ENCODE measurements at regions of chr14 and their contacts with region 1.

Region 1: DNA sequence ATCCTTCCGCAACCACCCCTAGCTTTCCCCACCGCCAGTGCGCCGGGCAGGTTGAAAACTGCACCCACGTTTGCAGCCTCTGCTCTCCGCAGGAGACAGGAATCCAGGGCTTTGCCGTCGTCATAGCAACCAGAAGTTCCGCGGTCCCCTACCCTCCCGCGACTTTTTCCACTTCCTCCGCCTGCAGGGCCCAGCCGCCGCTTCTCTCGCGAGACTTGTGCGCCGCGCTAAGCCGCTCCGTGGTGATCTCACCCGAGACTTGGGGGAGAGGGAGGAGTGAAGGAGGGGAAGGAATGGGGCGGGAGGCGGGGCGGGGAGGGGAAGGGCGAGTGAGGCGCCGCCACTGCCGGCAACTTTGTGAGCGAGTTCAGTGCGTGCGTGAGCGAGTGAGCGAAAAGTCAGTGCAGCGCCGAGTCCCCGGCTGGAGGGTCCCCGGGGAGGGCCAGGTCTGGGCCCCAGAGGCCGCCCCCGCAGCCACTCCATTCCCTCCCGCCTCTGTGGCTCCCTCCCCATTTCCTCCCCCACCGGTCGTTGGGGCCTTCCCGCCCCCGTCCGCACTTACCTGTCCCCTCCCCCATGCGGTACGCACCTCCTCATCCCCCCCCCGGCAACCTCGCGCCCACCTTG is 413.0 kb downstream of the PCNX1 start:
- DNase-seq: peak; percentile 96 to 99 (median 99)
- ATAC-seq: peak; percentile 89
- H3K4me3 ChIP-seq: peak within 1 kb of the TSS; percentile 56
- H3K4me1 ChIP-seq: peaks cover 8% of the 10 kb centered on the region
- CTCF ChIP-seq: no peak

Region 2: DNA sequence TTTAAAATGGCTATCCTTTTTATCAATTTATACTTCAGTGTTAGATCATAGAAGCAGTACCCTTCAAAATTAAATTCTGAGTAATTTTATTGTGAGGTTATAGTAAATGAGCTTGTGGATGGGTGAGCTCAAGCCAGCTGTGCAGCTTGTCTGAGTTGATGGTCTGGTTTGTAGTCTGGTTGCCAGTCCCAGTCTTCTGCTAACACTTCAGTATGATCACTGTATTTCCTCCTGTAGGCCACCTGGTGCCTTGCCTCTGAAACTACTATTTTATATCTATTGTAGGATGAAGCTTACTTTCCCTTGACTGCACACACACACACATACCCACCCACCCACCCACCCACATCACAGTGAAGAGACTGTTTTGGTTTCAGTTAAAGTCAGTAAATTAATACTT is 83.4 kb after region 1 on chr14:
- intact Hi-C with region 1: loop called in 1 of 2 experiments (anchors 10 kb)
- DNase-seq: peak in 1 of 3 donors; percentile 40
- ATAC-seq: peak; percentile 81
- H3K4me3 ChIP-seq: no peak overlapping the region
- H3K4me1 ChIP-seq: no peaks in the 10 kb centered on the region
- CTCF ChIP-seq: no peak